Activated CD8-positive, alpha-beta T cell treated with anti-CD3 and anti-CD28 coated beads for 36 hours (primary cell): ENCODE measurements at regions of chr6 and their contacts with region 1.

Region 1: GRCh38 chr6:446418-447366 is 55.1 kb downstream of the IRF4 start:
- DNase-seq: peak; percentile 97
- ATAC-seq: peak; percentile 78
- H3K4me3 Mint-ChIP-seq: peak overlapping the region; percentile 68
- H3K27ac Mint-ChIP-seq: peak overlapping the region; percentile 97
- H3K4me1 Mint-ChIP-seq: peaks cover 48% of the 10 kb centered on the region
- H3K27me3 Mint-ChIP-seq: no peaks in the 10 kb centered on the region
- CTCF ChIP-seq: no peak

Region 2: GRCh38 chr6:291697-292505 is 154.8 kb before region 1 on chr6 and contains the start of gene DUSP22:
- CTCF ChIA-PET with region 1: no interaction called
- POLR2A ChIA-PET with region 1: interaction called, 3 read pairs
- intact Hi-C with region 1: loop called (anchors 5 kb)
- DNase-seq: peak; percentile 92
- ATAC-seq: peak; percentile 71
- H3K4me3 Mint-ChIP-seq: peak within 1 kb of the TSS; percentile 95
- H3K27ac Mint-ChIP-seq: peak within 1 kb of the TSS; percentile 97
- H3K4me1 Mint-ChIP-seq: peaks cover 58% of the 10 kb centered on the region
- H3K27me3 Mint-ChIP-seq: no peaks in the 10 kb centered on the region
- CTCF ChIP-seq: no peak
- total RNA-seq, gene DUSP22: 32.5 to 34.2 TPM

Region 3: GRCh38 chr6:436308-437036 is 10.2 kb before region 1 on chr6:
- CTCF ChIA-PET with region 1: interaction called, 25 read pairs
- POLR2A ChIA-PET with region 1: interaction called, 67 read pairs
- intact Hi-C with region 1: no loop called
- DNase-seq: no peak
- ATAC-seq: no peak
- H3K4me3 Mint-ChIP-seq: no peak overlapping the region
- H3K27ac Mint-ChIP-seq: no peak overlapping the region
- H3K4me1 Mint-ChIP-seq: peaks cover 34% of the 10 kb centered on the region
- H3K27me3 Mint-ChIP-seq: no peaks in the 10 kb centered on the region
- CTCF ChIP-seq: no peak

Region 4: DNA sequence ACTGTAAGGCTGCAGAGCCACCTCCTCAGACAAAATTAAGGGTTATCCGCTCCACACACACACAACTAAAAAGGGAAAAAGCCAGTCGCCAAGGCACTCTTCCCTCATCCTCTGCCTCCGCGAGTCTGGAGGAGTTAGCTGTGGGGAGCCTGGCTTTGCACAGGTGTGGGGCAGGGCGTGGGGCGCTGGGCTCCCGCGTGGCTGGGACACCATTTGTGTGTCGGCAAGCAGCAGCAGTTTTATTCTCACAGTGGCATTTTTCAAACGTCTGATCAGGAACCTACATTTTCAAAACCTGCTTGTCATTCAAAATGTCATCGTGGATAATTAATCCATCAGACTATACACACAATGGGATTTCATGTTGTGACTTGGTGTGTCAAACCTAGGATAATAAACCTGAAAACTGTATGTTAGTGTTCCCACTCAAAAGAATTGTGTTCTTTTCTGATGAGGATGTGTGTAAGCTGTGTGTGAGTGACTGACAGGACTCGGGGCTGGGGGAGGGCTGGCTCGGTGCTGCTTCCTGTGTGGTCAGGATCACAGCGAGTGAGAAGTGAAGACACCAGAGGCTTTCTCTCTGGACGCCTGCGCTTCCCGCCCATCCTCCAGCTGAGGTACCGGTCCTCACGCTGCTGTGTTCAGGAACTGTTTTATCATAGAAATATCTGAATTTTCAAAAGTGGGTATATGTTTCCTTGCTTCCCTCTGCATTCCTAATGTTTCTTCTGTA is 27.9 kb after region 1 on chr6:
- CTCF ChIA-PET with region 1: interaction called, 6 read pairs
- POLR2A ChIA-PET with region 1: interaction called, 17 read pairs
- intact Hi-C with region 1: no loop called
- DNase-seq: peak; percentile 96
- ATAC-seq: peak; percentile 98
- H3K4me3 Mint-ChIP-seq: peak overlapping the region; percentile 40
- H3K27ac Mint-ChIP-seq: peak overlapping the region; percentile 88
- H3K4me1 Mint-ChIP-seq: peaks cover 73% of the 10 kb centered on the region
- H3K27me3 Mint-ChIP-seq: no peaks in the 10 kb centered on the region
- CTCF ChIP-seq: no peak

Region 5: DNA sequence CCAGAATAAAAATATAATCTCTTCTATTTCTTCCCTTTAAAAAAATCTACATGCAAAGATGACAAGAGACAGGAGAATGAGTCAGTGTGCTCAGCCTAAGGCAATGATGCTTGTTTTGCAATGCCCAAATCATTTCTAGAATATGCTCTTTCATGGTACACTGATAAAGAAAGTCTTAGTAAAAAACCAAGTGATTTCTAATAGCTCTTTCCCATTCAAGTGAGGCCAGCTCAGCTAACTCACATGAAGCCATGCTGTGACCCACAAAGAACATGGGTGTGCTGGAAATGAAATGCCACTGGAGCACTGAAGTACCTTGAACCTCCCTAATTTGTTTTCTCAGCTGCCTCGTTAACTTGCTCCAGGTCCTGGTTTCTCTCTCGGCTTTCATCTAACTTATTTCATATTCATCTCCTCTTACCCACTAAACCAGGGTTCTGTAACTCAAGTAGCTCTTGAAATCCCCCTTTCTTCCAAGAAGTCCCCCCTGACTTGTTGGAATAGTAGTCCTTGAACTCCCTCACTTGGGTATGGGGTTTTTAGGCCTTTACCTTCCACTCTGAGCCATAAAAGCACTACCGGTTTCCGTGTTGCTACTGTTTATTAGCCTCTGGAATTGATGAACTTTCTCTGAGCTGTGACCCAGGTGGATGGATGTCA is 37.5 kb after region 1 on chr6:
- CTCF ChIA-PET with region 1: interaction called, 7 read pairs
- POLR2A ChIA-PET with region 1: interaction called, 51 read pairs
- intact Hi-C with region 1: no loop called
- DNase-seq: peak; percentile 65
- ATAC-seq: peak; percentile 85
- H3K4me3 Mint-ChIP-seq: peak overlapping the region; percentile 7
- H3K27ac Mint-ChIP-seq: peak overlapping the region; percentile 93
- H3K4me1 Mint-ChIP-seq: peaks cover 79% of the 10 kb centered on the region
- H3K27me3 Mint-ChIP-seq: no peaks in the 10 kb centered on the region
- CTCF ChIP-seq: no peak

Region 6: DNA sequence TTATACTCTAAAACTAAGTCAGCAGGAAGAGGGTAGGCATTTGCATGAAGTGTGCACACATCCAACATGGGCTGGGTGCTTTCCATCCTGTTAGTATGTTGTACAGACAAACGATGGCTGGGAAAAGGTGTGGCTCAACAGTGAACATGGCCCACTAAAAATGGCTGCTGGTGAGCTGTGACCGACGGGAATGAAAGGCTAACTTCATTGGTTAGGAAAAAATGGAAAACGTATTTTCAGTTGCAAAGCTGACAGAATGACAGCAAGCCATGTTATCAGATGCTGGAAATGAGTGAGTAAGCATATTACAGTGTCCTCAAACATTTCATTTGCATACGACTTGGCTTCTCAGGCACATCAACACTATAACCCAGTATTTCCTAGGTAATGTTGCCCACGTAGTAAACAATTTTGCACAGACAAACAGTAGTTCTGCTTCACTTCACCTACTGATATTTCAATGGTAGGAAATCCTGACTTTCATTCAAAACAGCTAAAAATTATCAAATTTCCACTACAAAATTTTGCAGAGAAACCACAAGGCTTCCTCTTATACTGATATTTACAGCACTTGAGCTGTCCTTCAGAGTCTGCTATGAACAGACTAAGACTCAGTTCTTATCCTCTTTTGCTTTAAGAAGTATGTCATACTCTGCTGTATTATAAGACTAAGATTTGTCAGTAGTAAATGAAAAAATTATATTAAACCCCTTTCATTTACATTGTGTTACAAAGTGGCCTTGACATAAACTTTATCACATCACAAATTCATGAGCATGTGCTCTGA is 43.8 kb after region 1 on chr6:
- CTCF ChIA-PET with region 1: interaction called, 3 read pairs
- POLR2A ChIA-PET with region 1: interaction called, 51 read pairs
- intact Hi-C with region 1: no loop called
- DNase-seq: peak; percentile 59
- ATAC-seq: peak; percentile 34
- H3K4me3 Mint-ChIP-seq: peak overlapping the region; percentile 67
- H3K27ac Mint-ChIP-seq: peak overlapping the region; percentile 99
- H3K4me1 Mint-ChIP-seq: peaks cover 93% of the 10 kb centered on the region
- H3K27me3 Mint-ChIP-seq: no peaks in the 10 kb centered on the region
- CTCF ChIP-seq: no peak